K562 (cell line): ENCODE measurements at regions of chr22 and their contacts with region 1.

Region 1: GRCh38 chr22:17638432-17639246 is at the start of gene BCL2L13:
- DNase-seq: peak; percentile 94 to 98 (median 95)
- ATAC-seq: peak; percentile 91
- H3K4me3 ChIP-seq: peak within 1 kb of the TSS; percentile 90
- H3K27ac ChIP-seq: peak within 1 kb of the TSS; percentile 99
- H3K4me1 ChIP-seq: peaks cover 24 to 25% of the 10 kb centered on the region in 2 experiments
- H3K27me3 ChIP-seq: no peaks in the 10 kb centered on the region
- CTCF ChIP-seq: no peak; a peak in 2 of 6 replicates
- EP300 ChIP-seq: peak; percentile 78
- POLR2A ChIP-seq: peak; percentile 99
- RAD21 ChIP-seq: peak in 1 of 2 experiments; percentile 17; a peak in 1 of 4 replicates
- polyA plus RNA-seq, gene BCL2L13: 43.6 to 60.8 TPM

Region 2: GRCh38 chr22:17628304-17629166 is 10.1 kb before region 1 on chr22 and contains the start of gene ATP6V1E1:
- CTCF ChIA-PET with region 1: no interaction called
- POLR2A ChIA-PET with region 1: interaction called, 11 read pairs
- in situ Hi-C with region 1: no loop called
- intact Hi-C with region 1: no loop called
- DNase-seq: peak; percentile 99
- ATAC-seq: peak; percentile 98
- H3K4me3 ChIP-seq: peak within 1 kb of the TSS; percentile 80
- H3K27ac ChIP-seq: peak within 1 kb of the TSS; percentile 87
- H3K4me1 ChIP-seq: peaks cover 21 to 23% of the 10 kb centered on the region in 2 experiments
- H3K27me3 ChIP-seq: no peaks in the 10 kb centered on the region
- CTCF ChIP-seq: no peak
- EP300 ChIP-seq: peak; percentile 73
- POLR2A ChIP-seq: peak; percentile 91
- RAD21 ChIP-seq: no peak
- polyA plus RNA-seq, gene ATP6V1E1: 179 to 249 TPM

Region 3: DNA sequence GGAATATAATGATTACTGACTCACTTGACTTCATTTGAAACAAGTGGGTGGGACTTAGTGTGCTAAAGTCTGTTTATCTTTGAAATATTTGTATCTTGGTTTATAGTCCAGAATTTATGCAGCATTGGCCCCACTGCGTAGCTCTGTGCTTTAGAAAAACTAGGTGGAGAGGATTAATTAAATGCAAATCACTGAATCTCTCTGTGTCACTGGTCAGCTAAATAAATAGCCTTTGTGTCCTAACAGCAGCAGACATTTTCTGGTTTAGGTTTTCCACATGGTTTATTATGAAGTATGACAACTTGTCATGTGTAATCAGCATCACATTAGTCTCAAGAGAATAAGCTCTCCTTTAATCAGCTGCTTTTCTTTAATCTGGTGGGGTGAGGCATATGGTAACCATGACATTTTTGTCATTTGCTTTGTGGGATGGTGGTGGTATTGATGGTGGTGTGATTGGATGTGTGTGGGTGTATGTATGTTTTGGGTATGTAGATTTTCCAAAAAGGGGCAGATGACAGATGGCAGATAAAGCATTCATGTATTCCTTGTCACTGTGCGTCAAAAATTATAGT is 33.9 kb after region 1 on chr22:
- CTCF ChIA-PET with region 1: no interaction called
- POLR2A ChIA-PET with region 1: interaction called, 15 read pairs
- in situ Hi-C with region 1: no loop called
- intact Hi-C with region 1: loop called (anchors 1 kb)
- DNase-seq: peak in 1 of 4 experiments; percentile 10
- ATAC-seq: peak; percentile 29
- H3K4me3 ChIP-seq: no peak overlapping the region
- H3K27ac ChIP-seq: peak overlapping the region; percentile 71
- H3K4me1 ChIP-seq: peaks cover 9 to 23% of the 10 kb centered on the region in 2 experiments; a peak in 4 of 5 replicates
- H3K27me3 ChIP-seq: no peaks in the 10 kb centered on the region
- CTCF ChIP-seq: no peak
- EP300 ChIP-seq: 0 out of 2 replicates have a peak, but pooled peaks have one; percentile 0
- POLR2A ChIP-seq: no peak
- RAD21 ChIP-seq: no peak

Region 4: GRCh38 chr22:17785185-17786184 is 146.8 kb after region 1 on chr22:
- CTCF ChIA-PET with region 1: no interaction called
- POLR2A ChIA-PET with region 1: no interaction called
- in situ Hi-C with region 1: no loop called
- intact Hi-C with region 1: loop called (anchors 5 kb)
- DNase-seq: peak; percentile 85 to 91 (median 87)
- ATAC-seq: peak; percentile 82
- H3K4me3 ChIP-seq: no peak overlapping the region
- H3K27ac ChIP-seq: peak overlapping the region; percentile 77; the same call in 1 of the 3 replicates
- H3K4me1 ChIP-seq: peaks cover 33 to 68% of the 10 kb centered on the region in 2 experiments; a peak in 4 of 5 replicates
- H3K27me3 ChIP-seq: no peaks in the 10 kb centered on the region; a peak in 1 of 5 replicates
- CTCF ChIP-seq: peak; percentile 88 to 97 (median 92)
- EP300 ChIP-seq: no peak
- POLR2A ChIP-seq: no peak
- RAD21 ChIP-seq: peak; percentile 44 to 84

Region 5: GRCh38 chr22:17830043-17830961 is 191.7 kb after region 1 on chr22:
- CTCF ChIA-PET with region 1: no interaction called
- POLR2A ChIA-PET with region 1: no interaction called
- in situ Hi-C with region 1: no loop called
- intact Hi-C with region 1: no loop called
- DNase-seq: peak; percentile 89 to 91 (median 90)
- ATAC-seq: peak; percentile 97
- H3K4me3 ChIP-seq: no peak overlapping the region
- H3K27ac ChIP-seq: no peak overlapping the region
- H3K4me1 ChIP-seq: peaks cover 0 to 8% of the 10 kb centered on the region in 2 experiments; a peak in 1 of 5 replicates
- H3K27me3 ChIP-seq: no peaks in the 10 kb centered on the region
- CTCF ChIP-seq: peak; percentile 97 to 99 (median 98)
- EP300 ChIP-seq: no peak
- POLR2A ChIP-seq: no peak
- RAD21 ChIP-seq: peak; percentile 95 to 99